Pancreas (tissue), 10 donors: ENCODE measurements at regions of chr12 and their contacts with region 1.

Region 1: DNA sequence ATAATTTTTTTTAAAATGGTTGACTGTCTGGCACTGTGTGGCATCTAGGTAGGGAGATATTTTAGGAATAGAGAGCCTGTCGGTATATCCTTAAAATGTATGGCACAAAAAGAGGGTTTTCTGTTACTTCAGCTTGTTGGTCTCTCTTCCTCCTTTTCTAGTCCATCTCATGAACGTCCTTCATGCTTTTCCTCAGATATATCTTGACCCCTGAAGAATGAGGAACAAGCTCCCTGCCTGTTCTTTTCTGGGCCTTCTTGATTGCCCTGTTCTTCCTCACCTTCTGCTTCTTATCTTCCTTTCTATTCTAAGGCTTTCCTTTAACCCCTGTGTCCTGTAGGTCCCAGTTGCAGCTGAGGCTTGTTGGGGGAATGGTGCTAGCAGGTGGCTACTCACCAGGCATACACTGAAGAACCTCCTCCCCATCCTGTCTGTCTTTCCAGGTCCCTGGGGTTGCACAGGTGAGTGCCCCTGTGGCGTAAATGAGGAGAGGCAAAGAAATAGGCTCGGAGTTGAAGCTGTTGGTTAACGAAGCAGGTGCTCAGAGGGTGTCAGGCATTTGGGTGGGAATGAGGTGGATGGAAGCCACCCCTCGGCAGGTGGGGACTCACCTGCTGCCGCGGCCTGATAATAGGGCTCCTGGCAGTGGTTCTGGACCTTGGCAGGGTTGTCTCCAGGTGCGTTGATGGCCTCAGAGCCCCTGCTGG is 7.2 kb upstream of the C1R start:
- DNase-seq: peak in 1 of 6 donors; percentile 26
- ATAC-seq: no peak
- H3K4me3 ChIP-seq: no peak overlapping the region
- H3K27ac ChIP-seq: no peak overlapping the region
- H3K4me1 ChIP-seq: no peaks in the 10 kb centered on the region
- H3K27me3 ChIP-seq: no peaks in the 10 kb centered on the region
- CTCF ChIP-seq: no peak

Region 2: GRCh38 chr12:7060353-7060954 is 39.0 kb before region 1 on chr12 and contains the start of gene C1S:
- intact Hi-C with region 1: loop called in 1 of 3 experiments (anchors 5 kb)
- DNase-seq: peak in 4 of 6 donors; percentile 35 to 65 (median 58)
- ATAC-seq: peak; percentile 80 to 97 (median 94)
- H3K4me3 ChIP-seq: peak within 1 kb of the TSS in 1 of 4 donors; percentile 19
- H3K27ac ChIP-seq: peak within 1 kb of the TSS in 3 of 4 donors; percentile 19 to 61 (median 55)
- H3K4me1 ChIP-seq: peaks cover 0 to 8% (median 0%) of the 10 kb centered on the region in 3 donors
- H3K27me3 ChIP-seq: no peaks in the 10 kb centered on the region
- CTCF ChIP-seq: peak in 3 of 4 donors; percentile 33 to 50 (median 36)
- total RNA-seq, gene C1S: 20.4 to 162 (median 58.8) TPM

Region 3: GRCh38 chr12:7374423-7375144 is 275.1 kb after region 1 on chr12:
- intact Hi-C with region 1: no loop called
- DNase-seq: peak; percentile 41 to 71 (median 50)
- ATAC-seq: peak; percentile 72 to 89 (median 83)
- H3K4me3 ChIP-seq: no peak overlapping the region
- H3K27ac ChIP-seq: no peak overlapping the region
- H3K4me1 ChIP-seq: no peaks in the 10 kb centered on the region
- H3K27me3 ChIP-seq: no peaks in the 10 kb centered on the region
- CTCF ChIP-seq: peak in 3 of 4 donors; percentile 24 to 38 (median 36)